ENCODE measurements at regions of chr13 and their contacts with region 1.

Region 1: GRCh38 chr13:42836930-42837690 is 55.7 kb downstream of the FAM216B start:
- DNase-seq: peak; percentile 46
- ATAC-seq: peak; percentile 58
- H3K4me3 ChIP-seq: no peak overlapping the region
- H3K27ac ChIP-seq: no peak overlapping the region
- H3K4me1 ChIP-seq: peaks cover 13% of the 10 kb centered on the region
- H3K27me3 ChIP-seq: no peaks in the 10 kb centered on the region
- CTCF ChIP-seq: peak; percentile 57

Region 2: DNA sequence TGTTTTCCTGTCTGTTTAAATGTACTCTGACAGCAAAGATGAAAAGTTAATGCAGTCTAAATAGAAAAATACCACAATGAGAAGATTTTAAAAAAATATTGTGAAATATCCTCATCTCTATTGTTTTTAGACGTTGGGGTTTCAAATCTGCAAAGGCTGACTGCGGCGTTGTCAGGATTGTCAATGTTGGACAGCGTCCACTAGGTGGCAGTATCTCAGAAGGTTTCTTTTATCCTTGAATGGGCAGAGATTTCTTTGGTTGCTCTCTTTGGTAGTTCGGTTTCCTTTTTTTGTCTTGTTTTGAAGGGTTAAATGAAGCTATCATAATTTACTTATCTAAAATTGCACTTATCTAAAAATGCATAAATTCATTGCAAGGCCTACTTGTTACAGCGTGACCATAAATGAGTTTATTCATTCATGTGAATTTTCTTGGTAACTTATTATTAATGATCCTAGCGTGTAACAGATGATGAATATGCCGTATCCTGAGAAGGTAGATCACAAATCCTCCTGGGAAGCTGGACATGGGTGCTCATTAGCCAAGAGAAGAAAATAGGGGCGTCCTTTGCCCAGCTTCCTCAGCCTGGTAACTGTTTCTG is 242.0 kb before region 1 on chr13:
- CTCF ChIA-PET with region 1: no interaction called
- POLR2A ChIA-PET with region 1: no interaction called
- intact Hi-C with region 1: loop called (anchors 5 kb)
- DNase-seq: peak; percentile 78
- ATAC-seq: peak; percentile 68
- H3K4me3 ChIP-seq: no peak overlapping the region
- H3K27ac ChIP-seq: no peak overlapping the region
- H3K4me1 ChIP-seq: peaks cover 8% of the 10 kb centered on the region
- H3K27me3 ChIP-seq: no peaks in the 10 kb centered on the region
- CTCF ChIP-seq: peak; percentile 77

Region 3: GRCh38 chr13:42969558-42970172 is 132.6 kb after region 1 on chr13:
- CTCF ChIA-PET with region 1: no interaction called
- POLR2A ChIA-PET with region 1: no interaction called
- intact Hi-C with region 1: loop called (anchors 10 kb)
- DNase-seq: peak; percentile 65
- ATAC-seq: peak; percentile 86
- H3K4me3 ChIP-seq: no peak overlapping the region
- H3K27ac ChIP-seq: no peak overlapping the region
- H3K4me1 ChIP-seq: peaks cover 5% of the 10 kb centered on the region; the same call in 1 of the 2 replicates
- H3K27me3 ChIP-seq: no peaks in the 10 kb centered on the region
- CTCF ChIP-seq: peak; percentile 70

Region 4: DNA sequence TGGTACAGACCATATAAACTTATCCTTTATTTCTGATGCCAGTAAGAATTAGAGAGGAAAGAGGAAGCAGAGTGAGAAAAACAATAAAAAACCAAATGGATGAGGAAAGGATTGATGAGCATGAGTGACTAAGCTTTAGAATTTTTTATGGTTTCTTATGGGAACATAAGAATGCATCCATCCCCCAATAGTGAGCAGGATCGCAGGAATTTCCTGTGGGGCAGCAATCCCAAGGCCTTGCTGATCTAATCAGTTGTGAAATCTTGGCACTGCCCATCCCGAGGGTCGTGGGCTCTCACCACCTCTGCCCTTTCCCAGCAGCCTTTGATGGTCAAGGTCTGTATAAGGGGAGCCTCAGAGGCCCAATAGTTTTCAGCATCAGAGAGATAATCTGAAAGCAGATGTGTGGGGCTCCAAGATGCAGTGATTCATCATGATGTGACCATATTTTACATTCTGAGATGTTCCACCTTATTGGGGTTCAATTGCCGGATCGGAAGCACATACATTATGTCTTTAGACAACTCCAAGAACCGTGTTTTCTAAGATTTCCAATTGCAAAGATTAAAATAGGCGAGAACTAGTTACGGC is 408.4 kb after region 1 on chr13:
- CTCF ChIA-PET with region 1: no interaction called
- POLR2A ChIA-PET with region 1: interaction called, 16 read pairs
- intact Hi-C with region 1: no loop called
- DNase-seq: peak; percentile 77
- ATAC-seq: peak; percentile 90
- H3K4me3 ChIP-seq: no peak overlapping the region
- H3K27ac ChIP-seq: peak overlapping the region; percentile 80
- H3K4me1 ChIP-seq: peaks cover 24% of the 10 kb centered on the region
- H3K27me3 ChIP-seq: no peaks in the 10 kb centered on the region
- CTCF ChIP-seq: no peak

Region 5: GRCh38 chr13:43331672-43332071 is 494.6 kb after region 1 on chr13:
- CTCF ChIA-PET with region 1: no interaction called
- POLR2A ChIA-PET with region 1: no interaction called
- intact Hi-C with region 1: no loop called
- DNase-seq: no peak
- ATAC-seq: no peak
- H3K4me3 ChIP-seq: no peak overlapping the region
- H3K27ac ChIP-seq: no peak overlapping the region
- H3K4me1 ChIP-seq: no peaks in the 10 kb centered on the region
- H3K27me3 ChIP-seq: no peaks in the 10 kb centered on the region
- CTCF ChIP-seq: no peak

Region 6: DNA sequence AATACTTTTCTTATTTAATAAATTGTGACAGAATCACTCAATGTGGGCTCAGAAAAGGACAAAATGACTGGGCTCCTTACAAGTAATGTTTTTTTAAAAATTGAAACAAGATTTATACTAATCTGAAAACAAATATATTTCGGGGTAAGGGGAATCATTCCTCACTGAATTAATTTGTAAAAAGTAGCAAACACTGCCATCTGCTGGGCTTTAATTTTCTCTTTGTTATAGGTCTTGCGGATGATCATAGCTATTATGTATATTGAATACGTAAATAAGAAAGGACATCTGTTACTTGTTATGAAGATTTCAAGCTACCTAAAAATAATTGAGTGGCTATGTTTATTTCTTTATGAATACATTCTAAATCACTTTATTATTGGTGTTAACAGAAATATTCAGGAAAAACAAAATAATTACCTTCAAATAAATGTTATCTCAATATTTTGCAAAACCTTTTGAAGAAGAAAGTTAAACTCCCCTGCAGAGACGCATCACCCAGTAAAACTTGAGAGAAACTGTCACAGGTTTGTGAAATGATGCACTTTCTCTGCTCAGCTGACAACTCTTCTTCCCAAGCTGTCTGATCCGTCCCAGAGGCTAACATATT is 967.5 kb after region 1 on chr13:
- CTCF ChIA-PET with region 1: no interaction called
- POLR2A ChIA-PET with region 1: no interaction called
- intact Hi-C with region 1: loop called (anchors 10 kb)
- DNase-seq: peak; percentile 82
- ATAC-seq: peak; percentile 66
- H3K4me3 ChIP-seq: peak overlapping the region; percentile 63
- H3K27ac ChIP-seq: peak overlapping the region; percentile 95
- H3K4me1 ChIP-seq: peaks cover 29% of the 10 kb centered on the region
- H3K27me3 ChIP-seq: no peaks in the 10 kb centered on the region
- CTCF ChIP-seq: peak; percentile 63